ENCODE measurements at regions of chr20 and their contacts with region 1.

Region 1: DNA sequence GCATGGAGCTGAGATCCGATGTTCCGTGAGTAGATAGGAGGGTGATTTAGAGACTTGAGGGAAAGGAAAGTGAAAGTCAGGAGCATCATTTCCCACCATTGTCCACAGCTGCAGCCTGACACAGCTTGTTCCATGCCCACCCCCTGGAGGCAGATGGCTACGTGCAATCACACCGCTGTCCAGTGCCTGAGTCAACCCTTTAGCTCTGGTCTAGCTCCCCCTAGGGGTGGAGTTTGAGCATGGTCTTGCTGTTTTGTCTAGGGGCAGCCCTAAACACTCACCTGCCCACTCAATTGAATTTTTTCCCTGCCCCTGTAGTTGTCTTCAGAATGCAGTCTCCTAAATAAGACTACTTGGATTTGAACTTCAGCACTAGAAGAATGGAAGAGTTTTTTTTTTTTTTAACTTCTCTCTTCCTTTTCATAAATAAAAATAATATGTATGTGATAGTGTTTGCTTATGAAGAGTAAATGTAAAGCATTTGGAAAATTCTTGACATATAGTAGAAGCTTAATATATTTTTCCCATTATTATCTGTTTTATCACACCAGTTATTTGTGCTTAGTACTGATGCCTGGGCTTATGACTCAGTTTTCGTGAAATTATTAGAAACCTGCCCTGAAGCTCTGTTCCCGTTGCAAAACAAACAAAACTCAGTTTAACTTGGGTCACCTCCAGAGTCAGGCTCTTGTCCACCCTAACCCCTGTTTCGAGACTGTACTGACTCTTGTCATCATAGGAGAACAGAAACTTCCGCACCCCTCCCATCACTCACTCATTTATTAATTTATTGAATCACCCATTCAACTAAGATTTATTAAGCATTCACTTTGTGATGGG is 814.8 kb downstream of the MAFB start:
- DNase-seq: peak; percentile 70

Region 2: DNA sequence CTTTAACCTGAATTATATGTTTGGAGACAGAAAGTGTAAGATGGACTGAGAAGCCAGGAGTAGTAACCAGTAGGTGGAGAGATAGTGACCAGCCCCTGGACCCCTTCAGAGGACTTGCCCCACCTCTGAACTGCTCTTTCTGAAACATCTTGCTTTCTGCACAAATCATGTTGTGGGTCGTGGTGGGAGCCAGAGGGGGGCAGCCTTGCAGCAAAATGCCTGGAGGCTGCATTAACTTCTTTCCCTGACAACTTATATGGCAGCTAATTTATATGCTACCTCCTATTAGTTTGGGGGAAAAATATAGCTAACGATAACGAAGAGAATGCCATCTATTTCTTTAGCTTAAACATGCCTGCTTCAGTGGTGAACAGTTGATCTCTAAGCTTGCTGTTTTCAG is 45.0 kb before region 1 on chr20:
- CTCF ChIA-PET with region 1: interaction called, 21 read pairs
- POLR2A ChIA-PET with region 1: interaction called, 3 read pairs
- DNase-seq: peak; percentile 12

Region 3: DNA sequence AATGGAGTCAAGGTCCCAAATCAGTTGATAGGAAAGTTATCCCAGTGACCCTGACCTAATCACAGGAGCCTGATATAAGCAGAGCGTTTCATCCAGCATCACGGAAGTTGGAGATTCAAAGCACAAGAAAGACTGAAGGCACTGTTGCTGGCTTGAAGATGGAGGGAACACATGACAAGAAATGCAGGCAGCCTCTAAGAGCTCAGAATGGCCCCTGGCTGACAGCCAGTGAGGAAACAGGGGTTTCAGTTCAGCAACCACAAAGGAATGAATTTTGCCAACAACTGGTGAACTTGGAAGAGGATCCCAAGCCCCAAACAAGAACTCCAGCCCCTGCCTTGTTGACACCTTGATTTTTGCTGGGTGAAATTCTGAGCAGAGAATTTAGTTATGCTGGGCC is 36.3 kb after region 1 on chr20:
- CTCF ChIA-PET with region 1: interaction called, 10 read pairs
- POLR2A ChIA-PET with region 1: no interaction called
- DNase-seq: no peak

Region 4: DNA sequence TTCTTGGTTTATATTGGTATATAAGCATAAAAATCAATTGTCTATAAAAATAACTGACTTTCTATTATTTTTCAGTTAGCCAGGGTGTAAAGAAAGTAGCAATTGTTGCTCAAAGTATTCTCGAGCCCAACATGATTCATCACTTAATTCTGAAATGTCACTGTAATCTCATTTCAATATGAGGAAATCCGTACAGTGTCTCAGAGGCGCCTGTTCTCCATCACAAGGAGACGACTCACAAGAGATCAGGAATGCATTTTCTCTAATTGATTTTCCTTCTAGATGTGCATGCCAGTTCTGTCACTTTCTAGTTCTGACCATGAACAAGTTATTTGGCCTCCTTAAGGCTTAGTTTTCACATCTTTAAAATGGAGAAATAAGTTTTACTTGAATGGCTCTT is 61.6 kb after region 1 on chr20:
- CTCF ChIA-PET with region 1: no interaction called
- POLR2A ChIA-PET with region 1: no interaction called
- DNase-seq: no peak

Measured in HEK293T (cell line).